ENCODE measurements at regions of chr11 and their contacts with region 1.

Region 1: GRCh38 chr11:931385-931784 is 5.7 kb downstream of the AP2A2 start:
- DNase-seq: no peak
- H3K4me3 ChIP-seq: no peak overlapping the region
- H3K27ac ChIP-seq: no peak overlapping the region
- H3K4me1 ChIP-seq: no peaks in the 10 kb centered on the region
- H3K27me3 ChIP-seq: no peaks in the 10 kb centered on the region
- CTCF ChIP-seq: no peak

Region 2: DNA sequence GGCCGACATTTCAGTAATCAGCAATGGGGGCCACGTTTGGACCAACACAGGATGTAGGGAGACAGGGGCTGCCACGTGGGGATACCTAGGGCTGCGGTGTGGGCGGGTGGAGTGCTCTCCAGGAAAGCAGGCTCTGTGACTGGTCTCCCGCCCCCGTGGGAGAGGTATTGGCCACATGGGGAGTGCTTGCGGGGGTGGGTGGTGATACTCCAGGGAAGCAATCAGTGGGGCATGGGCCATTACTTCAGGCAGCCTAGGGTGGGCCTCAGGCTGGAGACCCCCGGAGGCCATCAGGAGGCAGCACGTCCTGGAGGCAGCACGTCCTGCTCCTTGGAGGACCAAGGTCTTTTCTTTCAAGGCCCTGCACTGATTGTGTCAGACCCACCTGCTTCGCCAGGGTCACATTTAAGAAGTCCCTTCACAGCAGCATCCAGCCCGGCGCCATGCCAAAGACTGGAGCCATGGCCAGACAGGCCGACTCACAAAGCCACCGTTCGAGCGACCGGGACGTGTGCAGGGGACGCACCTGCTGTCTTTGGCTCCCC is 140.3 kb after region 1 on chr11:
- CTCF ChIA-PET with region 1: no interaction called
- POLR2A ChIA-PET with region 1: interaction called, 25 read pairs
- intact Hi-C with region 1: no loop called
- DNase-seq: no peak
- H3K4me3 ChIP-seq: no peak overlapping the region
- H3K27ac ChIP-seq: no peak overlapping the region
- H3K4me1 ChIP-seq: peaks cover 22% of the 10 kb centered on the region
- H3K27me3 ChIP-seq: no peaks in the 10 kb centered on the region
- CTCF ChIP-seq: no peak